Dendritic cell treated with granulocyte-macrophage colony-stimulating factor and Interleukin-4, amounts not matched to agents 40 ng/mL and 50 ng/mL, for 4 days (primary cell): ENCODE measurements at regions of chr2 and their contacts with region 1.

Region 1: DNA sequence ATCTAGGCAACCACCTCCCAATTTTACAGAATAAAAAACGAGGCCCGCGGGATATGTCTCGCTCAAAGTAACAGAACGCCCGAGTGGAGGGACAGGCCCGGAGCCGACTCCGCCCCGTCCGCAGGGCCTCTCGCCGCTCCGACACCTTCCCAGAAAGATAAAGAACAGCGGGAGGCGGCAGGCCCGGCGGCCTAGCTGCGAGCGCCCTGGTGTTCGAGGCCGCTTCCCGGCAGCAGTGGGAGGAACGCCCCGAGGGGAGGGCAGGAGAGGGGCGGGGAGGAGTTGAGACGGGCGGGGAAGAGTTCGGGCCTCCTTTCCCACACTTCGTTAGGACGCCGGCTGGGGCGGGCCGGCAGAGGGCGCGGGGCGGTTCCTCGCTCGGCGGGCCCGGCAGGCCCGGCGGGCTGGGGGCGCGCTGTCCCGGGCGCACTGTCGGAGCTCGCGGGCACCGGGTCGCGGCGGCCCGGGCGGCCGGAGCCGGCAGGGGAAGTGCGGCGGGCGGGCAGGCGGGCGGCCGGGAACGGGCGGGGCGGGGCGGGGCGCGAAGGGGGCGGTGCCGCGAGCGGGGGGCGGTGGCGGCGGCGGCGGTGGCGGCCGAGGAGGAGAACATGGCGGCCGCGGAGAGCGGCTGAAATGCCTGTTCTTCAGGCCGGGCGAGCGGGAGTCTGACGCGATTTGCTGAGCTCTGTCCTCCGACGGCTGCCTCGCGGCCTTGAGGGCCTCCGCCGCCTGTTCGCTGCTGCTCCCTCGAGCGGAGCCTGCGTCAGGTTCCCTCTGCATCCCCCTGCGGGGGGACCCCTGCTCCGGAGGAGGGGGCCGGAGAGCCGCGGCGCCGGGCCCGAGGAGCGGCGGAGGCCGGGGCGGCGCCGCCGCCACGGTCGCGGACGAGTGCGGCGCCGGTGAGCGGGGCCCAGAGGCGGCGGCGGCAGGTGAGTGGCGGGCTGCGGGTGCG is at the start of gene NCOA1:
- H3K4me3 Mint-ChIP-seq: peak within 1 kb of the TSS; percentile 91
- H3K27ac Mint-ChIP-seq: peak within 1 kb of the TSS; percentile 99
- H3K4me1 Mint-ChIP-seq: peaks cover 45% of the 10 kb centered on the region
- H3K27me3 Mint-ChIP-seq: no peaks in the 10 kb centered on the region

Region 2: GRCh38 chr2:24454294-24454693 is 36.7 kb before region 1 on chr2:
- intact Hi-C with region 1: loop called (anchors 5 kb)
- H3K4me3 Mint-ChIP-seq: no peak overlapping the region
- H3K27ac Mint-ChIP-seq: no peak overlapping the region
- H3K4me1 Mint-ChIP-seq: peaks cover 50% of the 10 kb centered on the region
- H3K27me3 Mint-ChIP-seq: no peaks in the 10 kb centered on the region